Activated naive CD4-positive, alpha-beta T cell treated with anti-CD3 and anti-CD28 coated beads for 36 hours (primary cell): ENCODE measurements at regions of chr5 and their contacts with region 1.

Region 1: DNA sequence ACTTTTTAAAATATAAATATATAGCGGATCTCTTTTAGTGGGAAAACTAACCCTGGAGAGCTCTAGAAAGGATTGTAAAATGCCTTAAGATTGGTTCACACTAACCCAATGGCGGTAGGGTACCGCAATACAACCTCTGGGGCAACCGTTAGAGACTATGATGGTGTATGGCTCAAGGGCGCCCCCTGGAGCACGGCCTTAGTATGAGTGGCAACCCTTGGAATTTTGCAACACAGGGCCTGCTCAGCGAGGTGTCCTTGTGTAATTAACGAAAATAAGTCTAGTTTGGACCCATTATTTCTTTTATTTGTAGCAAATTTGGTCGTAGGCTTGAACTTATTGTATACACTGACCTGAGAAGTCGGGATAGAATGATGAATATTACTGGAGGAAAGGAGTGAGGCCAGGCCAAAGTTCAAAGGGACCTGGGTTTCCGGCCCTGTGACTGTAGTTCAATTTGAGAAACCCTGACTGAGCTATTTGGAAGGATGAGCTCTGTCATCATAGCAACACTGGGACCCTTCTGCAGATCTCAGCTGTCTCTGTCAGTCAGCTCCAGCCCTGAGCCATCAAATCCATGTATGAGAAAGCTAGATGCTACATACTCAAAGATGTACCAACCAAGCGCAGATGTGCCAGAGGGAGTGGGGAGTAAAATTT is 54.8 kb downstream of the CAMK4 start:
- DNase-seq: peak; percentile 96
- H3K4me3 Mint-ChIP-seq: peak overlapping the region; percentile 38
- H3K27ac Mint-ChIP-seq: peak overlapping the region; percentile 83
- H3K4me1 Mint-ChIP-seq: peaks cover 67% of the 10 kb centered on the region
- H3K27me3 Mint-ChIP-seq: no peaks in the 10 kb centered on the region

Region 2: GRCh38 chr5:110757118-110757729 is 521.8 kb before region 1 on chr5:
- CTCF ChIA-PET with region 1: no interaction called
- intact Hi-C with region 1: loop called (anchors 1 kb)
- DNase-seq: peak; percentile 38
- H3K4me3 Mint-ChIP-seq: no peak overlapping the region
- H3K27ac Mint-ChIP-seq: no peak overlapping the region
- H3K4me1 Mint-ChIP-seq: peaks cover 26% of the 10 kb centered on the region
- H3K27me3 Mint-ChIP-seq: no peaks in the 10 kb centered on the region

Region 3: DNA sequence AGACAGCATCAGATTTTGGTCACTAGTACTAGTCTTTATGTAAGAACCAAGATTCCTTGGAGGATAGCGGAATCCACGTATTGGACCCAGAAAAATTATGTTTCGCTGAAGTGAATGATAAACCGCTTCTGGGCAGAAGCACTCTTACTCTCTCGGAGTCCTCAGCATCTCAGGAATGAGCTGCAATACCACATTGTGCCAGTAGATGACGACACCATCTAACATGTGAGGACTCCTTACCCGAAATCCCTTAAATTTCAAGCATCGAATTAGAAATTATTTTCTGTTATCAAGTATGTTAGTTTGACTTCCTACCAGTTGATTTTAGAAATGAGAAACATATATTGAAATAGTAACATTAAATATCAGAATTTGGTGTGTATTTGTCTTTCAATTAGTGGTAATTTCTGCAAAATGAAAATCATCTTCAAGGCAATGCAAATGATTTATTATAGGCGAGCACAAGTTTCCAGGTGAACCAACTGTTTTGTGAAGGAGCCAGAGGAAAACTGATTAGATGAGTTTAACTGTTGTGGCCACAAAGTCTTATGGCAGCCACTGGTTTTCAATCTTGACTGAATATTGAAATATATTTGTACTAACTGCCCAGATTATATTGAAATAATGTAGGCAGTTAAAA is 120.8 kb before region 1 on chr5:
- CTCF ChIA-PET with region 1: interaction called, 198 read pairs
- intact Hi-C with region 1: loop called (anchors 1 kb)
- DNase-seq: peak; percentile 93
- H3K4me3 Mint-ChIP-seq: no peak overlapping the region
- H3K27ac Mint-ChIP-seq: no peak overlapping the region
- H3K4me1 Mint-ChIP-seq: peaks cover 7% of the 10 kb centered on the region
- H3K27me3 Mint-ChIP-seq: no peaks in the 10 kb centered on the region

Region 4: DNA sequence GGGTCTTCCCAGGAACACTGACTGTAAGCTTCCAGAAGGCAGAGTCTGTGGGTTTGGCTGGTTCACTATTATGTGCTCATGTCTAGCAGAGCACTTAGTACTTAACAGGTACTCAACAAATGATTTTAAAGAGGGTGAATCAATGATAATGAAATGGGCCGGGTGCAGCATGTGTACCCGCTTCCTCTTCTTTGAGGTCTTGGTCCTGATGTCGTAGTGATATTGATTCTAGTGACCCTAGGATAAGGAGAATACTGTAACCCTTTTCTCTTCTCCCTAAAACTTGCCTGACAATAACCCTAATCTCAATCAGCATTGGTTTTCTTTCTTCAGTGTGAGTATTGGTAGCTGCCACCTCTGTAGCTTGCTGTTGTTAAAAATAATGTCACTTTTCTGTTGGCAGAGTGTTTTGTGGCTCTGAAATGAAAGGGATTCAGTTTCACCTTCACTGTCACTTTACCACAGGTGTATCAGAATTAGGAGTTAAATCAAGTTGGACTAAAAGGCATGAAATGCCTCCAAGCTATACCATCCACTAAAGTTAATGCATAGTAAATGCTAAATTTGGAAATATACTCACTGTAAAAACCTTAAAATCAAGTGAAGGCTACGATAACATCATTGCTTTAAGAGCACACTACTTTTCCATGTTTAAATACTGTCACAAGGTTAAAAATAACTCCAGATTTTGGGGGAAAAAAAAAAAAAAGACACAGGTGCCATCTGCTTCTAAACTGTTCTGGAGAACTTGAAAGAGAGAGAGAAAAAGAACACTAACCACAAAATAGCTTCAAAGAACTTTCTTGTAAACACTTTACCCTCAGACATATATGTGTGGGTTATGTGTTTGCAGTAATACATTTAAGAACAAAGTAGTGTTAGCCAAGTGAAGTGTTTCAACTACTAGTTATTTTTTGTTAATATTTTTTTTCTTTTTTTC is 48.8 kb before region 1 on chr5:
- CTCF ChIA-PET with region 1: interaction called, 39 read pairs
- intact Hi-C with region 1: loop called (anchors 5 kb)
- DNase-seq: peak; percentile 43
- H3K4me3 Mint-ChIP-seq: peak overlapping the region; percentile 68
- H3K27ac Mint-ChIP-seq: peak overlapping the region; percentile 94
- H3K4me1 Mint-ChIP-seq: peaks cover 69% of the 10 kb centered on the region
- H3K27me3 Mint-ChIP-seq: no peaks in the 10 kb centered on the region

Region 5: GRCh38 chr5:111266491-111266890 is 12.5 kb before region 1 on chr5:
- CTCF ChIA-PET with region 1: interaction called, 10 read pairs
- intact Hi-C with region 1: loop called (anchors 1 kb)
- DNase-seq: no peak
- H3K4me3 Mint-ChIP-seq: no peak overlapping the region
- H3K27ac Mint-ChIP-seq: peak overlapping the region; percentile 4
- H3K4me1 Mint-ChIP-seq: peaks cover 50% of the 10 kb centered on the region
- H3K27me3 Mint-ChIP-seq: no peaks in the 10 kb centered on the region

Region 6: DNA sequence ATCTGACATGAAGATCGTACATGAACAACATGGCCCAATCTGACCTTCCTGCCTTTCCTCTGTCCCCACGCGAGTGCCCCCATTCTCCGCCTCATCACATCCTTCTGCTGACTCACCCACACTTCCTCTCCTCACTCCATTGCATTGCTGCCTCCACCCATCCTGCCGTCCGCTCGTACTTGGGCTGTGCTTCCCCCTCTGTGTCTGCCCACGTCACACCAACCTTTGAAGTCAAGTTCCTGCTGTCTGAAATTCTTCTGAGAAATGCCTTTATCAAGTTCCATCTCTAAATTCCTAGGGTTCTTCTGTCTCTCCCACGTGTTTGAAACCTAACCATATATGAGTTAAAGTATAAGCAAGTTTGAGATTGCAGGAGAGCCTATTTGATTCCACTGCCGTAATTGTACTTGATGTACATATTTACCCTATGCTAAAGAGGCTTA is 251.3 kb after region 1 on chr5:
- CTCF ChIA-PET with region 1: interaction called, 6 read pairs
- intact Hi-C with region 1: loop called (anchors 1 kb)
- DNase-seq: peak; percentile 92
- H3K4me3 Mint-ChIP-seq: peak overlapping the region; percentile 62
- H3K27ac Mint-ChIP-seq: peak overlapping the region; percentile 83
- H3K4me1 Mint-ChIP-seq: peaks cover 16% of the 10 kb centered on the region
- H3K27me3 Mint-ChIP-seq: no peaks in the 10 kb centered on the region